ENCODE measurements at regions of chr9 and their contacts with region 1.

Region 1: DNA sequence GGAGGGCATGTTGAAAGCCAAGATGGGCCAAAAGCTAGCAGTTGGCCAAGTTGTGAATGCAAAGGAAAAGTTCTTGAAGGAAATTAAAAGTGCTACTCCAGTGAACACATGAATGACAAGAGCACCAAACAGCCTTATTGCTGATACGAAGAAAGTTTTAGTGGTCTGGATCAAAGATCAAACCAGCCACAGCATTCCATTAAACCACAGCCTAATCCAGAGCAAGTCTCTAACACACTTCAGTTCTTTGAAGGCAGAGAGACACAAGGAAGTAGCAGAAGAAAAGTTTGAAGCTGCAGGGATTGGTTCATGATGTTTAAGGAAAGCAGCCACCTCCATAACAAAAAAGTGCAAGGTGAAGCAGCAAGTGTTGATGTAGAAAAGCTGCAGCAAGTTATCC is 71.6 kb downstream of the ERCC6L2 start:
- DNase-seq: no peak
- H3K4me3 ChIP-seq: no peak overlapping the region
- H3K4me3 Mint-ChIP-seq: no peak overlapping the region
- H3K27ac ChIP-seq: no peak overlapping the region
- H3K27ac Mint-ChIP-seq: no peak overlapping the region
- H3K4me1 ChIP-seq: no peaks in the 10 kb centered on the region
- H3K4me1 Mint-ChIP-seq: peaks cover 2 to 24% (median 9%) of the 10 kb centered on the region in 3 donors
- H3K27me3 ChIP-seq: no peaks in the 10 kb centered on the region
- H3K27me3 Mint-ChIP-seq: no peaks in the 10 kb centered on the region

Region 2: DNA sequence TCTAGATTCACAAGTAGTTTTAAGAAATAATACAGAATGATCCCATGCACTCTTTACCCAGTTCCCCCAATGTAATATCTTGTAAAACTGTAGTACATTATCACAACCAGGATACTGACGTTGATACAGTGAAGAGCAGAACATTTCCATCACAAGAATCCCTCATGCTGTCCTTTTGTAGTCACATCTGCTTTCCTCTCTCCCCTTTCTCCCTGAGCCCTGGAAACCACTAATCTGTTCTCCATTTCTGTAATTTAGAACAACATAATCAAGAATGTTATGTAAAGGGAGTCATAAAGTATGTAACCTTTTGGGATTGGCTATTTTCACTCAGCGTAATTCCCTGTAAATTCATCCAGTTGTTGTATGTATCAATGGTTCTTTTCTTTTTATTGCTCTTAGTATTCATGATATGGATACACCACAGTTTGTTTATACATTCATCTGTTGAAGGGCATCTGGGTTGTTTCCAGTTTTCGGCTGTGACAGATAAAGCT is 10.5 kb before region 1 on chr9:
- CTCF ChIA-PET with region 1: no interaction called
- POLR2A ChIA-PET with region 1: no interaction called
- DNase-seq: no peak
- H3K4me3 ChIP-seq: no peak overlapping the region
- H3K4me3 Mint-ChIP-seq: no peak overlapping the region
- H3K27ac ChIP-seq: no peak overlapping the region
- H3K27ac Mint-ChIP-seq: no peak overlapping the region
- H3K4me1 ChIP-seq: no peaks in the 10 kb centered on the region
- H3K4me1 Mint-ChIP-seq: peaks cover 0 to 7% (median 3%) of the 10 kb centered on the region in 3 donors
- H3K27me3 ChIP-seq: no peaks in the 10 kb centered on the region
- H3K27me3 Mint-ChIP-seq: no peaks in the 10 kb centered on the region

Region 3: GRCh38 chr9:96008502-96009222 is 61.5 kb after region 1 on chr9:
- CTCF ChIA-PET with region 1: no interaction called
- POLR2A ChIA-PET with region 1: interaction called, 11 read pairs
- DNase-seq: no peak
- H3K4me3 ChIP-seq: no peak overlapping the region
- H3K4me3 Mint-ChIP-seq: peak overlapping the region in 6 of 7 donors; percentile 16 to 77 (median 54)
- H3K27ac ChIP-seq: peak overlapping the region; percentile 92
- H3K27ac Mint-ChIP-seq: peak overlapping the region; percentile 78 to 99 (median 96)
- H3K4me1 ChIP-seq: peaks cover 50% of the 10 kb centered on the region
- H3K4me1 Mint-ChIP-seq: peaks cover 10 to 42% (median 14%) of the 10 kb centered on the region in 3 donors
- H3K27me3 ChIP-seq: no peaks in the 10 kb centered on the region
- H3K27me3 Mint-ChIP-seq: no peaks in the 10 kb centered on the region

Measured in CD8-positive, alpha-beta memory T cell (primary cell).